OCI-LY7 (cell line): ENCODE measurements at regions of chr12 and their contacts with region 1.

Region 1: GRCh38 chr12:122265931-122266771 is at the start of gene VPS33A:
- DNase-seq: peak; percentile 100
- H3K4me3 ChIP-seq: peak within 1 kb of the TSS; percentile 93
- H3K27ac ChIP-seq: peak within 1 kb of the TSS; percentile 80
- H3K4me1 ChIP-seq: peaks cover 17% of the 10 kb centered on the region
- CTCF ChIP-seq: no peak
- total RNA-seq, gene VPS33A: 21.1 and 22.2 TPM in 2 replicates

Region 2: GRCh38 chr12:122225683-122226407 is 40.3 kb before region 1 on chr12 and contains the start of gene DIABLO:
- CTCF ChIA-PET with region 1: no interaction called
- POLR2A ChIA-PET with region 1: no interaction called
- intact Hi-C with region 1: loop called (anchors 1 kb)
- DNase-seq: peak; percentile 99
- H3K4me3 ChIP-seq: peak within 1 kb of the TSS; percentile 98
- H3K27ac ChIP-seq: peak within 1 kb of the TSS; percentile 48
- H3K4me1 ChIP-seq: peaks cover 17% of the 10 kb centered on the region
- CTCF ChIP-seq: no peak
- total RNA-seq, gene DIABLO: 53.7 and 56.5 TPM in 2 replicates

Region 3: GRCh38 chr12:122399592-122400373 is 133.6 kb after region 1 on chr12:
- CTCF ChIA-PET with region 1: no interaction called
- POLR2A ChIA-PET with region 1: no interaction called
- intact Hi-C with region 1: no loop called
- DNase-seq: peak; percentile 84
- H3K4me3 ChIP-seq: peak overlapping the region; percentile 26
- H3K27ac ChIP-seq: peak overlapping the region; percentile 32
- H3K4me1 ChIP-seq: peaks cover 14% of the 10 kb centered on the region
- CTCF ChIP-seq: peak; percentile 93